ENCODE measurements at regions of chr1 and their contacts with region 1.

Region 1: DNA sequence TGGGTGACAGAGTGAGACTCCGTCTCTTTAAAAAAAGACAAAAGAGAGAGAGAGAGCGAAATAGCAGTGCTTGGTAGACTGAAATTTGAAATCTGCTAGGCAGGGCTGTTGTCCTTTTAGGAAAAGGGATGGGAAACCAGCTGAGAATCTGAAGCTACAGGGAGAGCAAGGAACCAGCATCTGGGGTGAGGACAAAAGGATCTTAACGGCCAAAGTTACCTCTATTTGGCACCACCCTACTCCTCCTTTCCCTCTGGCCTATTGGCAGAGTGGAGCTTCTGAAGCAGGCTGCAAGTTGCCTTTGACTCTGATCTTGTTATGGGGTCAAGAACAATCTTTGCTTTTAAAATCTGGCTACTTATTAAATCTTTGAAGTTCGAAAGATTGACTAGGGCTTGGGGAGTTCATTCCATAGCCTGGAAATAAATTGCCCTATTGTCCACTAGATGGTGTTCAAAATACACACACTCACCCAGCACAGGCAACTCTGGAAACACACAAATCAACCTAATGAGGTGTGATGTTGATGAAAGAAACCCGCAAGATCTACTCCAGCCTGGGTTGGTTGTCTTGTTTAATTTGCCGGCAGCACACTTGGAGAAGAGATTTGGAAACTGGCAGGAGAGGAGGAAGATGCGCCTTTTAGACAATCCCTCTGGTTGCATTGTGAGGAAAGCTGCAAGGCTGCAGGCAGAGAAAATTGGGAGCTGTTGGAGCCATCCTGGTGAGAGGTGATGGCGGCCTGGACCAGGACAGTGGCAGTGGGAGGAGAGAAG is 16.5 kb upstream of the PARP1 start:
- DNase-seq: peak; percentile 77
- H3K4me3 Mint-ChIP-seq: no peak overlapping the region
- H3K27ac Mint-ChIP-seq: no peak overlapping the region
- H3K4me1 Mint-ChIP-seq: no peaks in the 10 kb centered on the region
- H3K27me3 Mint-ChIP-seq: no peaks in the 10 kb centered on the region
- CTCF ChIP-seq: peak; percentile 88

Region 2: GRCh38 chr1:226029093-226029496 is 395.3 kb before region 1 on chr1:
- CTCF ChIA-PET with region 1: no interaction called
- POLR2A ChIA-PET with region 1: no interaction called
- intact Hi-C with region 1: no loop called
- DNase-seq: no peak
- H3K4me3 Mint-ChIP-seq: no peak overlapping the region
- H3K27ac Mint-ChIP-seq: no peak overlapping the region
- H3K4me1 Mint-ChIP-seq: peaks cover 12% of the 10 kb centered on the region
- H3K27me3 Mint-ChIP-seq: no peaks in the 10 kb centered on the region
- CTCF ChIP-seq: no peak

Region 3: GRCh38 chr1:226407497-226408284 is 16.7 kb before region 1 on chr1 and contains the start of gene PARP1:
- CTCF ChIA-PET with region 1: interaction called, 66 read pairs
- POLR2A ChIA-PET with region 1: interaction called, 7 read pairs
- intact Hi-C with region 1: no loop called
- DNase-seq: peak; percentile 98
- H3K4me3 Mint-ChIP-seq: peak within 1 kb of the TSS; percentile 78
- H3K27ac Mint-ChIP-seq: peak within 1 kb of the TSS; percentile 82
- H3K4me1 Mint-ChIP-seq: peaks cover 38% of the 10 kb centered on the region
- H3K27me3 Mint-ChIP-seq: no peaks in the 10 kb centered on the region
- CTCF ChIP-seq: peak; percentile 99
- total RNA-seq, gene PARP1: 192 and 235 TPM in 2 replicates

Region 4: GRCh38 chr1:226519716-226520598 is 95.5 kb after region 1 on chr1:
- CTCF ChIA-PET with region 1: interaction called, 10 read pairs
- POLR2A ChIA-PET with region 1: no interaction called
- intact Hi-C with region 1: no loop called
- DNase-seq: no peak
- H3K4me3 Mint-ChIP-seq: no peak overlapping the region
- H3K27ac Mint-ChIP-seq: no peak overlapping the region
- H3K4me1 Mint-ChIP-seq: no peaks in the 10 kb centered on the region
- H3K27me3 Mint-ChIP-seq: peaks cover 72% of the 10 kb centered on the region
- CTCF ChIP-seq: no peak

Region 5: DNA sequence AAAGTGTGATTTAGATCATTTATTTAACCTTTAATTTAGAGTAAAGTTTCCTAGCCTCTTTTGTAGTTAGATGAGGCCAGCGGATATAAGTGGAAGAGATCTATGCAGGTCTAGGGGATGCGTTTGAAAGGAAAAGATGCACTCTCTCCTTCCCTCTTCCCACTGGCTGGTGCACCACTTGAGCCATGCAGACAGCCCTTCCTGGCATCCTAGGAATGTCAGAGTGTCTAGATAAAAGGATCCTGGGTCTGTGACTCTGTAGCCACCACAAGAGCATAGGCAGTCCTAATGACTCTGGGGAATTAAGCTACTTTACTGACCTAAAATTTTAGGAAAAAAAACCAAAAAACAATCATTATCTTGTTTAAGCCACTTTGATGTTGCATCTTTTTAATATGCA is 108.1 kb after region 1 on chr1:
- CTCF ChIA-PET with region 1: interaction called, 20 read pairs
- POLR2A ChIA-PET with region 1: no interaction called
- intact Hi-C with region 1: no loop called
- DNase-seq: no peak
- H3K4me3 Mint-ChIP-seq: no peak overlapping the region
- H3K27ac Mint-ChIP-seq: no peak overlapping the region
- H3K4me1 Mint-ChIP-seq: no peaks in the 10 kb centered on the region
- H3K27me3 Mint-ChIP-seq: peaks cover 17% of the 10 kb centered on the region
- CTCF ChIP-seq: no peak

Region 6: DNA sequence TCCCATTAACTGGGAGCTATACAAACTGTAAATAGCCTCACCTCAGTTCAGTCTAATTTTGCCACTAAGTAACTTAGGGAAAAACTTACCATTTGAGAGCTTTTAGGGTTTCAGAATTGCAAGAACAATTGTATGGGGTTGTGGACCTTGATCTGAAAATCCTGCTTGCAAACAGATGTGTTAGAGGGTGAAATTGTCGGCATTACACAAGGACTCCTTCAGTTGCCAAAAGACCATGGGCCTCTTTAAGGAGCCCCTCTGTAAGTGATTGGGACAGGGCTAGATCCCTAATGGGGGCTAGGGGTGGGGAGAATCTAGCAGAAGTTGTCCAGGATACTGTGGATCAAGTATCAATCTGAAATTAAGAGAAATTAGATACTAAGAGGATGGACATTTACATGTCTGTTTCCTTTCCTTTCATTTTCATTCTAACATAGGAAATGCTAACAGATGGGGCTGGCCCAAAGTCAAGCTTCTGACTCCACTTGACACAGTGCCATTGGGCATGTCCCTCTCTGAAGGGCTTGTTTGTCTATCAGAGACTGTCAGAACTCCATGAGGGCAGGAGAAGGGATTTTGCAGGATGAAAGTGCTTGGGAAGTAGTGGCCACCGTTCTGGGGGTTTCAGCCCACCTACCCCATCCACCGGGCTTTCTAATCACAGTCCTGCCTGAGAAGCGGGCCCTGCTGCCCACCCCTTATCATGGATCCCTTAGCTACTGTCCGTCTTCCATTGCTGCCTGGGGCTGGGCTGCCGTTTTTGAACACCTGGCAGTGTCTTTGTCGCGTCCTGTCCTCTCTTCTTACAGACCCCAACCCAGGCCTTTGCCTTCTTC is 178.8 kb after region 1 on chr1:
- CTCF ChIA-PET with region 1: interaction called, 20 read pairs
- POLR2A ChIA-PET with region 1: interaction called, 4 read pairs
- intact Hi-C with region 1: loop called (anchors 1 kb)
- DNase-seq: peak; percentile 91
- H3K4me3 Mint-ChIP-seq: peak overlapping the region; percentile 71
- H3K27ac Mint-ChIP-seq: peak overlapping the region; percentile 97
- H3K4me1 Mint-ChIP-seq: peaks cover 42% of the 10 kb centered on the region
- H3K27me3 Mint-ChIP-seq: peaks cover 8% of the 10 kb centered on the region
- CTCF ChIP-seq: no peak

Region 7: DNA sequence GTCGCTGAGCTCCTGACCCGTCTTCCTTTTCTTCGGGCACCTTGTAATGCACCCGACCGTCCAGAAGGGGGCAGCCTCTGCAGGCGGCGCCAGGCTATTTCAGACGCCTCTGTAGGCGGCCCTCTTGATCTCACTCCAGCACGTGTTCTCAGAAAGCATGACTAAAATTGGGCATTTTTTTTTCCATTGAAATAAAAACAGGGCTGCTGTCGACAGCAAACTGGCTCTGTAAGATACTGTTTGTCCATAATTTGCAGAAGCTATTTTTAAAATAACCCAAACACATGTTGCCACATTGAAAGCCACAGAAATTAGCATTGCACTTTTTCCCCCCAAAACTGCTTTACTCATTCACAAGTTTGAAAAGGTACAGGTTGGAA is 202.2 kb after region 1 on chr1:
- CTCF ChIA-PET with region 1: interaction called, 11 read pairs
- POLR2A ChIA-PET with region 1: no interaction called
- intact Hi-C with region 1: loop called (anchors 1 kb)
- DNase-seq: peak; percentile 85
- H3K4me3 Mint-ChIP-seq: no peak overlapping the region
- H3K27ac Mint-ChIP-seq: peak overlapping the region; percentile 36
- H3K4me1 Mint-ChIP-seq: peaks cover 22% of the 10 kb centered on the region
- H3K27me3 Mint-ChIP-seq: no peaks in the 10 kb centered on the region
- CTCF ChIP-seq: peak; percentile 99

Region 8: DNA sequence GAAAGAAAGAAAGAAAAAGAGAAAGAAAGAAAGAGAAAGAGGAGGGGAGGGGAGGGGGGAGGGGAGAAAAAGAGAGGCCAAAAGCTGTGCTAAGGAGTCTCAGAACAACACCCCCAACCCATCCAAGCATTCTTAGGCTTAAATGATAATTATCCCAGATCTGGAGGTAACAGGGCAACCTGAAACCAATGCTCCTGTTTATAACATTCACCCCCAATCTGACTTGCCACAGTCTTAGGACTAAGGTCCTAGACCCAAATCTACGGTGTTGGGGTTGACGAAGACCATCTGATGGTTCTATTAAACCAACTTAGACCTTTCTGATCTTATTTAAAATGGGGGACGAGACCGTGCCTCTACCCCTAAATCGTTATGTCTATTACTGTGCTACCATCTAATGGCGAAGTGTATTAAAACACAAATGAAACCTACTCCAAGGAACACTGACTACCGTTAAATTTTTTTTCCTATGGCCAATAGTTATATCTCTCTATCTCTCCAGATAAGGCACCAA is 1013.1 kb after region 1 on chr1:
- CTCF ChIA-PET with region 1: interaction called, 12 read pairs
- POLR2A ChIA-PET with region 1: no interaction called
- intact Hi-C with region 1: loop called (anchors 1 kb)
- DNase-seq: peak; percentile 83
- H3K4me3 Mint-ChIP-seq: peak overlapping the region; percentile 58
- H3K27ac Mint-ChIP-seq: peak overlapping the region; percentile 53
- H3K4me1 Mint-ChIP-seq: peaks cover 16% of the 10 kb centered on the region
- H3K27me3 Mint-ChIP-seq: no peaks in the 10 kb centered on the region
- CTCF ChIP-seq: peak; percentile 80